Activated CD4-positive, alpha-beta T cell treated with anti-CD3 and anti-CD28 coated beads, Interleukin-2, amount 10 ng/mL, durations not matched to agents 24 days and 14 days (primary cell): ENCODE measurements at regions of chr6 and their contacts with region 1.

Region 1: DNA sequence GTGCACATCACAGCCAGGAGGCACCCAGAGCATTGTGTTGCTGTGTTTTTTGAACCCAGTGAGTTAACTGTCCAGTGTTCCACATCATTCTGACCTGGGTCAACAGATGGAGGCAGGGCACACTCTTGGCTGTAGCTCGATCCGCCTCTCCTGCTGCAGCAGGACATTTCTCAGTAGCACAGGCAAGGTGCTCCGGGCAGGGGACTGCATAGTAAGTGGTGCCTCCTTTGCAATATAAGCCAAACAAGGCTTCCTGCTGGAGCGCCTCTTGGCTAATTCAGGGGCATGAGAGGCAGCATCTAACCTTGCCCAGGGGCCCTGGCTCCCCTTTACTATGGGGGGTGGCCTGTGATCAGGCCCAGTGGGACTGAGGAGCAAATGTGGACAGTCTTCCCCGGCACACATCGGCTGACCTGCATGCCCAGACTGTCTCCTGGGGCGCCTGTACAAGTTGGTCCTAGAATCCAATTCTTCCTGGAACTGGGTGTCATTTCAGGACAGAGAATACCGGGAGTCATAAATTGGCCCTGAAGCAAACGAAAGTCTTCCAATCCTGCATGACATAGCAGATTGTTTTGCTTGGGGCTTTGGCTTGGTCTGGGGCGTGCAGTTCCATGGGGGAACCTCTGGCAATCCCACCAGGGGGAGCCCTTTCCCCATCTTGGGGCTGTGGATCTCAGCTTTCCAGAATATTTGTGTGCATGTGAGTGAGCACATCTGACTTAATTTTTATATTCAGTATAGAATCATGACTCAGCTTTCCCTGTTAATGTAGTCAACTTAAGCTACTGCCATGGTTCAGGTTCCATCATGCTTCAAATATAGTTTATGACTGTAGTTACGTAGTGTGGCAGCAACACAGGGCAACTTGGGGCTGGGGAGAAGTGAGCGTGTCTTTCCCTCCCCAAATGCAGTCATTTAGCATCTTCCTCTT is 56.0 kb upstream of the DDR1 start:
- DNase-seq: peak; percentile 94
- H3K4me3 Mint-ChIP-seq: peak overlapping the region; percentile 86
- H3K27ac Mint-ChIP-seq: peak overlapping the region; percentile 94
- H3K4me1 Mint-ChIP-seq: peaks cover 70% of the 10 kb centered on the region
- H3K27me3 Mint-ChIP-seq: no peaks in the 10 kb centered on the region

Region 2: GRCh38 chr6:30769088-30769852 is 59.0 kb before region 1 on chr6:
- intact Hi-C with region 1: no loop called
- DNase-seq: peak; percentile 91
- H3K4me3 Mint-ChIP-seq: peak overlapping the region; percentile 76
- H3K27ac Mint-ChIP-seq: peak overlapping the region; percentile 97
- H3K4me1 Mint-ChIP-seq: peaks cover 75% of the 10 kb centered on the region
- H3K27me3 Mint-ChIP-seq: peaks cover 2% of the 10 kb centered on the region

Region 3: DNA sequence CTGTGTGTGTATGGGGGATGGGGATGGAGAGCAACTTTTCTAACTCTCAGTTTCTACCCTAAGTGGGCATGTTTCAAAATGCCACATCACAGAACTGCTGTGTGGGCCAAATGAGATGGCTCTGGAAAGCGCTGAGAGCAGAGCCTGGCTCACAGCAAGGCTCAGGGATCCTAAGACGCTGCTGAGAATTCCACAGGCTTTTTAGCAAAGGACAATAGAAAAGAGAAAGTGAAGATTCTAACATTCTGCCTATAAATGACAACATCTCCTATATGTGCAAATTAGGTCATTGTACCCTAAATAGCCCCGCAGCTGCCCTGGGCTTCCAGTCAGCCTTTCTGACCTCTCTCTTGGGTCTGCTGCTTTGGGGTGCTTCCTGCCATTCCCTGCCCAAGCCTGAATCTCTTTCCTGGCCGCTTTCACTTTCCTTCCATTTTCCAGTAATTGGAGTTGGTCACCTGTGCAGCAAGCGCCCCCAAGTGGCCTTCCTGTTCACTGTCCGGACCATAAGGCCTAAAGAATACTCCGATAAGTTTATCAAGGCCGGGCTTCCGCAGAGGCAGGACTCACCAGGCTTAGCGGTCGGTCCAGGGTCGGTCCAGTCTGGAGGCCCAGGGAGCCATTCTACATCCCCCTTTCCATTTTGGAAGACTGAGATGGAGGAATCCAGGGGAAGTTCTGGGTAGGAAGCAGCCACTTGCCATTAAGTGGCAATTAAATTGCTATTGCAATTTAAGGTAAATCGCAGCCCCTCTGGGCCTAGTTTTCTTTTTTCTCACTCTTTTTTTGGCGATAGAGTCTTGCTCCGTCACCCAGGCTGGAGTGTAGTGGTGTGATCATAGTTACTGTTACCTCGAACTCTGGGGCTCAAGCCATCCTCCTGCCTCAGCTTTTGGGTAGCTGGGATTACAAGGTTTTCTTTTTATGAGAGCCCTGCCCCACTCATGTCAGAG is 49.4 kb after region 1 on chr6:
- intact Hi-C with region 1: loop called (anchors 1 kb)
- DNase-seq: peak; percentile 92
- H3K4me3 Mint-ChIP-seq: peak overlapping the region; percentile 76
- H3K27ac Mint-ChIP-seq: peak overlapping the region; percentile 85
- H3K4me1 Mint-ChIP-seq: peaks cover 37% of the 10 kb centered on the region
- H3K27me3 Mint-ChIP-seq: peaks cover 3% of the 10 kb centered on the region

Region 4: GRCh38 chr6:31087494-31088089 is 259.3 kb after region 1 on chr6:
- intact Hi-C with region 1: loop called (anchors 2 kb)
- DNase-seq: peak; percentile 96
- H3K4me3 Mint-ChIP-seq: no peak overlapping the region
- H3K27ac Mint-ChIP-seq: no peak overlapping the region
- H3K4me1 Mint-ChIP-seq: peaks cover 11% of the 10 kb centered on the region
- H3K27me3 Mint-ChIP-seq: peaks cover 16% of the 10 kb centered on the region